GM12878 (cell line): ENCODE measurements at regions of chr9 and their contacts with region 1.

Region 1: DNA sequence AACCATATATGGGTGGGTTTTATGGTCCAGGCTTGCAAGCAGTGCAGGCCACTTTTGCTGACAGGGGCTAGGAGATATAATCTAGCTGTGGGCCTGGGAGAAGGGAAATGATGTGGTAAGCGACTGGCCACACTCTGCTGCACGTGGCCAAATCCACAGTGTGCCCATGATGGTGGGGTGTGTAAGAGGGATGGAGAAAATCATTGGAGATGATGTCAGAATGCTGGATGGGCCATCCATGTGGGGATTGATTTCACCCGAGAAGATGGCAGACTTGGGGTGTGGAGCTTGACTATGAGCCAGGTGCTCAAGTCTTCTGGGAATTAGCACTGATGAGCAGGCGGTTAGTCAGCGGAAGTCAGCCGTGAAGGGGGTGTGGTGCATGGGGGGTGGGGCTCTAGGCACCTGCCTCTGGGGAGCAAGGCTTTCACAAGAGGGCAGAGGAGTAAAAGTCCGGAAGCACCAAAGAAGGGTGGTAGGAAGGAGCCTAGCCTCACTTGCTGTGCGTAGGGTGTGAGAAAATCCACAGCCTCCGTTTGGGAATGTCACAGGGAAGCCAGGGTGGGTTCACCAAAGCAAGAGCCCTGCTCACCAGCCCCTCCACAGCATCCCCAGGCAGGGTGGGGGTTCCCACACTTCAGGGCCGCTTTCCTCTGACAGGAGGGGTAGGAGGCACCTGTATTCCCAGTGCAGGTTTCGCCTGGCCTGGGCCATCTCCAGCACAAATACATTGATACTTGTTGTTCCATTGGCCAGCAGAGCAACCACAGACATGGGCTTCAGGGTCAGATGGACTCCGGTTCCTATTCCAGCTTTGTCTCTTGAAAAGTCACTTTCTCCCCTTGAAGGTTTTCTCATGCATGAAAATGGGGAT is 44.5 kb upstream of the ANGPTL2 start:
- DNase-seq: peak; percentile 94
- ATAC-seq: peak; percentile 84
- H3K4me3 ChIP-seq: no peak overlapping the region
- H3K27ac ChIP-seq: peak overlapping the region; percentile 79
- H3K4me1 ChIP-seq: peaks cover 36% of the 10 kb centered on the region
- H3K27me3 ChIP-seq: no peaks in the 10 kb centered on the region
- CTCF ChIP-seq: no peak
- EP300 ChIP-seq: peak; percentile 81 to 94
- POLR2A ChIP-seq: peak; percentile 63
- RAD21 ChIP-seq: no peak

Region 2: DNA sequence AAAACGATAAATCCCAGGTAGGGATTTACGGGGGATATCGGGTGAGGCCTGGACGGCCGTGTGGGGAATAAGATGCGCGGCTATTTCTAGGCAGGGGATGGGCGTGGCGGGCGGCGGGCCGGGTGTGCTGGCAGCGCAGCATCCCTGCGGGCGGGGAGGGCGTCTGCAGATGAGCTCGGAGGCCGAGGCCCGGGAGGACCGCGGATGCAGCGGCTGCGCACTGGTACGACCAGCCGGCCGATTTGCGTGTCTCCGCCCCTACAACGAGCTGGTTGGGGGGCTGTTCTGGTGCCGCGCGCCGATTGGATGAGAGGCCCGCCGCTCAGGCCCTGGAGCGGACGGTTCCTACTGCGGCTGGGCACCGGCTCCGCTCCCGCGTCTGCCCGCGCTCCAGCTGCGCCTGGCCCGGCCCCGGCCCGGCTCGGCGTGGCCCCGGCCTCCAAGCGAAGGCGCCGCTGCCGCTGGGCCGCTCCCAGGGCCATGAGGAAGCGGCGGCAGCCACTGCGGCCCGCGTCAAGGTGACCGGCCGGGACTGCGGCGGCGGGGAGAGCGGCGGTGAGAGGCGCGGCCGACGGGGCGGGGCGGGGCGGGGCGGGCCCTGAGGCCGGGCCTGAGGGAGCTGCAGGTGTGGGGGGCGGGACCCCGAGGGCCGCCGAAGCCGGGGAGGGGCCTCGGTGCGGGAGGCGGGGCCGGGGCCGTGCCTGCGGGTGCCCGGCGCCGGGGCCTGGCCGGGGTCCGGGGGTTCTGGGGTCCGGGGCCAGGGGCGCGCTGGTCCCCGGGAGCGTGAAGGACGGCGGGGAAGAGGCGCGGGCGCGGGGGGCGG is 252.2 kb before region 1 on chr9 and contains the start of gene RALGPS1:
- CTCF ChIA-PET with region 1: no interaction called
- POLR2A ChIA-PET with region 1: no interaction called
- RAD21 ChIA-PET with region 1: no interaction called
- SMC1A ChIA-PET with region 1: no interaction called
- in situ Hi-C with region 1: no loop called
- intact Hi-C with region 1: no loop called
- DNase-seq: peak; percentile 73
- ATAC-seq: peak; percentile 100
- H3K4me3 ChIP-seq: peak within 1 kb of the TSS; percentile 74; the same call in 1 of the 2 replicates
- H3K27ac ChIP-seq: no peak within 1 kb of the TSS
- H3K4me1 ChIP-seq: peaks cover 8% of the 10 kb centered on the region; the same call in 1 of the 2 replicates
- H3K27me3 ChIP-seq: no peaks in the 10 kb centered on the region
- CTCF ChIP-seq: no peak
- EP300 ChIP-seq: no peak
- POLR2A ChIP-seq: no peak
- RAD21 ChIP-seq: no peak
- polyA plus RNA-seq, gene RALGPS1: 0.13 to 0.77 TPM

Region 3: DNA sequence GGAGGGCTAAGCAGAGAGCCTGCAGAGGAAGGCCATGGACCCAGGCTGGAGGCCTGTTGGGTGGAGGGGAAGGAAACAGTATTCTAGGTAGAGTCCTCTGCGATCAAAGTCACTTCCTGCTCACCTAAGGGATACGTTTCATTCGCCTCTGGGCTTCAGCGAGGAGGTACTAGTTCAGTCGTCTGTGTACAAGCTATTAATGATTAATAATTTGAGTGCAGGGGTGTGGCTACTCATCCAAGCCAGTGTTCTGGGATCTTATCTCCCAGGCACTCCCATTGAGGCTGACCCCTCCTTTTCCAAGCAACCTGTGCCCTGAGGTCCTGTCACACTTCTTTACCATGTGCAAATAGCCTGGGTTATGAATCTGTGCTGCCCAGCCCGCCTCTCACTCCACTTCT is 227.1 kb before region 1 on chr9:
- CTCF ChIA-PET with region 1: interaction called, 20 read pairs
- POLR2A ChIA-PET with region 1: no interaction called
- RAD21 ChIA-PET with region 1: interaction called, 17 read pairs
- SMC1A ChIA-PET with region 1: interaction called, 30 read pairs
- in situ Hi-C with region 1: no loop called
- intact Hi-C with region 1: loop called (anchors 1 kb)
- DNase-seq: no peak
- ATAC-seq: no peak
- H3K4me3 ChIP-seq: no peak overlapping the region
- H3K27ac ChIP-seq: no peak overlapping the region
- H3K4me1 ChIP-seq: no peaks in the 10 kb centered on the region
- H3K27me3 ChIP-seq: no peaks in the 10 kb centered on the region
- CTCF ChIP-seq: no peak
- EP300 ChIP-seq: no peak
- POLR2A ChIP-seq: no peak
- RAD21 ChIP-seq: no peak

Region 4: GRCh38 chr9:126999315-127000068 is 167.4 kb before region 1 on chr9:
- CTCF ChIA-PET with region 1: interaction called, 27 read pairs
- POLR2A ChIA-PET with region 1: interaction called, 51 read pairs
- RAD21 ChIA-PET with region 1: interaction called, 157 read pairs
- SMC1A ChIA-PET with region 1: interaction called, 188 read pairs
- in situ Hi-C with region 1: no loop called
- intact Hi-C with region 1: no loop called
- DNase-seq: no peak
- ATAC-seq: peak; percentile 86
- H3K4me3 ChIP-seq: no peak overlapping the region
- H3K27ac ChIP-seq: peak overlapping the region; percentile 33; the same call in 1 of the 2 replicates
- H3K4me1 ChIP-seq: peaks cover 27% of the 10 kb centered on the region
- H3K27me3 ChIP-seq: no peaks in the 10 kb centered on the region
- CTCF ChIP-seq: no peak
- EP300 ChIP-seq: no peak
- POLR2A ChIP-seq: no peak
- RAD21 ChIP-seq: no peak

Region 5: GRCh38 chr9:127058011-127058644 is 108.8 kb before region 1 on chr9:
- CTCF ChIA-PET with region 1: interaction called, 11 read pairs
- POLR2A ChIA-PET with region 1: interaction called, 38 read pairs
- RAD21 ChIA-PET with region 1: interaction called, 59 read pairs
- SMC1A ChIA-PET with region 1: interaction called, 71 read pairs
- in situ Hi-C with region 1: no loop called
- intact Hi-C with region 1: no loop called
- DNase-seq: no peak
- ATAC-seq: no peak
- H3K4me3 ChIP-seq: no peak overlapping the region
- H3K27ac ChIP-seq: no peak overlapping the region
- H3K4me1 ChIP-seq: peaks cover 5% of the 10 kb centered on the region
- H3K27me3 ChIP-seq: no peaks in the 10 kb centered on the region
- CTCF ChIP-seq: no peak
- EP300 ChIP-seq: no peak
- POLR2A ChIP-seq: no peak
- RAD21 ChIP-seq: no peak

Region 6: DNA sequence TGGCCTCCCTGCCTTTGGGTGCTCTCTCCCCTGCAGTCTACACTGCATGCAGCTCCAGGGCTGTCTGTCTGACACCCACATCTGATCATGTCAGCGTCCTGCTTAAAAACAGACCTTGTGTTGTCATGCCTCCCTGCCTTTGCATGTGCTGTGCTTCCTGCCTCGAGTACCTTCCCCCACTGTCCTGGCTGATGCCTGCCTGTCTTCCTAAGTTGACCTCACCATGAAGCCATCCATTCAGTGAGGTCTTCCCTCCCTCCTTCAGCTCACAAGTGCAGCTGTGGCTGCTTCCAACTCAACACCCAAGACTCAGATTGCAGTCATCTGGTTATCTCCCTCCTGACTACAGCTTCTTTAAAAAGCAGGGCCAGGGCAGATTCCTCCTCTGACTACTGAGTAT is 49.9 kb before region 1 on chr9:
- CTCF ChIA-PET with region 1: interaction called, 18 read pairs
- POLR2A ChIA-PET with region 1: interaction called, 5 read pairs
- RAD21 ChIA-PET with region 1: interaction called, 54 read pairs
- SMC1A ChIA-PET with region 1: interaction called, 68 read pairs
- in situ Hi-C with region 1: no loop called
- intact Hi-C with region 1: loop called (anchors 5 kb)
- DNase-seq: no peak
- ATAC-seq: peak; percentile 50
- H3K4me3 ChIP-seq: no peak overlapping the region
- H3K27ac ChIP-seq: no peak overlapping the region
- H3K4me1 ChIP-seq: peaks cover 21% of the 10 kb centered on the region
- H3K27me3 ChIP-seq: no peaks in the 10 kb centered on the region
- CTCF ChIP-seq: no peak
- EP300 ChIP-seq: no peak
- POLR2A ChIP-seq: no peak
- RAD21 ChIP-seq: 0 out of 2 replicates have a peak, but pooled peaks have one; percentile 0

Region 7: GRCh38 chr9:127136081-127136879 is 30.6 kb before region 1 on chr9:
- CTCF ChIA-PET with region 1: interaction called, 3 read pairs
- POLR2A ChIA-PET with region 1: interaction called, 7 read pairs
- RAD21 ChIA-PET with region 1: interaction called, 5 read pairs
- SMC1A ChIA-PET with region 1: interaction called, 10 read pairs
- in situ Hi-C with region 1: no loop called
- intact Hi-C with region 1: no loop called
- DNase-seq: no peak
- ATAC-seq: no peak
- H3K4me3 ChIP-seq: no peak overlapping the region
- H3K27ac ChIP-seq: no peak overlapping the region
- H3K4me1 ChIP-seq: no peaks in the 10 kb centered on the region
- H3K27me3 ChIP-seq: no peaks in the 10 kb centered on the region
- CTCF ChIP-seq: no peak
- EP300 ChIP-seq: no peak
- POLR2A ChIP-seq: no peak
- RAD21 ChIP-seq: no peak